ENCODE measurements at regions of chr6 and their contacts with region 1.

Region 1: GRCh38 chr6:79949233-79949632 is 1.9 kb upstream of the ELOVL4 start:
- DNase-seq: peak; percentile 23
- H3K4me3 ChIP-seq: no peak overlapping the region
- H3K27ac ChIP-seq: no peak overlapping the region
- H3K27me3 ChIP-seq: peaks cover 6% of the 10 kb centered on the region
- CTCF ChIP-seq: peak; percentile 72

Region 2: GRCh38 chr6:79307321-79308036 is 641.8 kb before region 1 on chr6:
- CTCF ChIA-PET with region 1: no interaction called
- POLR2A ChIA-PET with region 1: no interaction called
- DNase-seq: no peak
- H3K4me3 ChIP-seq: no peak overlapping the region
- H3K27ac ChIP-seq: no peak overlapping the region
- H3K27me3 ChIP-seq: no peaks in the 10 kb centered on the region
- CTCF ChIP-seq: no peak

Region 3: DNA sequence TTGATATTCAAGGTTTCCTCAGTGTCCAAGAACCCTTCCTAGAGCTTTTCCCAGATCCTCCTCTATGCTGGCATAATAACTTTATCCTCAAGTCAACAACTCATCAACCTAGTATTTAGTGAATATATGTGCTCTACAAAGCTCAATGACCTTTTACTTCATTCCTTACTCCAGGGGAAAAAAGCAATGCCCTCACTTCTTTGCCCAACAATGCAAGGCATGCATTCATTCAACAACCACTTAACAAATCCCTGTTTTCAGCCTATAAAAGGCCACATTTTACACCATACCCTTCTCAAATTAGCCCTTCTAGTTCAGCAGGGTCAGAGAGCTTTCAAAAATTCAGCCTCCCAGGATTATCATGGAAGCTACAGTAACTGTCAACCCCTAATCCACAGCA is 19.2 kb before region 1 on chr6:
- CTCF ChIA-PET with region 1: interaction called, 10 read pairs
- POLR2A ChIA-PET with region 1: no interaction called
- DNase-seq: no peak
- H3K4me3 ChIP-seq: no peak overlapping the region
- H3K27ac ChIP-seq: no peak overlapping the region
- H3K27me3 ChIP-seq: no peaks in the 10 kb centered on the region
- CTCF ChIP-seq: no peak

Region 4: GRCh38 chr6:79964607-79965081 is 15.4 kb after region 1 on chr6:
- CTCF ChIA-PET with region 1: interaction called, 10 read pairs
- POLR2A ChIA-PET with region 1: no interaction called
- DNase-seq: no peak
- H3K4me3 ChIP-seq: no peak overlapping the region
- H3K27ac ChIP-seq: no peak overlapping the region
- H3K27me3 ChIP-seq: no peaks in the 10 kb centered on the region
- CTCF ChIP-seq: no peak

Region 5: DNA sequence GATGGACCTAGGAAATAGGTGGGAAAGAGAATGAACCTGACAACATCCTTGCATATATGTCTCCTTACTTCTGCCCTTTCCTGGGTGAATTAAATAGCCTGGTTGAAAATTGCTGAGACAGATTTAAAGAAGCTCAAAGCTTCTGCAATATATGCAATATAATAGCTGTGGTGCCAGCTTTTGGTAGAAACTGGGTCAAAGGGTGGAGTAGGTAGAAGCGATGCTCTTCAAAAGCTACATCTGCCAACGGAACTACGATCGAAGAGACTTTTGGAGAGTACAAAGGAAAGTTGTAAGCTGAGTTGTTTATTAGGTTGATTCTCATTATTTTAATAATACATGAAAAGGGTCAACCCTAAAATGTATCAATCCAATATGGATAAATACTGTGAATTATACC is 32.4 kb after region 1 on chr6:
- CTCF ChIA-PET with region 1: interaction called, 11 read pairs
- POLR2A ChIA-PET with region 1: no interaction called
- DNase-seq: no peak
- H3K4me3 ChIP-seq: no peak overlapping the region
- H3K27ac ChIP-seq: no peak overlapping the region
- H3K27me3 ChIP-seq: no peaks in the 10 kb centered on the region
- CTCF ChIP-seq: no peak

Region 6: GRCh38 chr6:80004173-80005072 is 55.2 kb after region 1 on chr6 and contains the start of gene TTK:
- CTCF ChIA-PET with region 1: interaction called, 14 read pairs
- POLR2A ChIA-PET with region 1: no interaction called
- DNase-seq: peak; percentile 86
- H3K4me3 ChIP-seq: peak within 1 kb of the TSS; percentile 80
- H3K27ac ChIP-seq: peak within 1 kb of the TSS; percentile 85
- H3K27me3 ChIP-seq: no peaks in the 10 kb centered on the region
- CTCF ChIP-seq: no peak
- polyA plus RNA-seq, gene TTK: 5.1 and 8.0 TPM in 2 replicates

Region 7: DNA sequence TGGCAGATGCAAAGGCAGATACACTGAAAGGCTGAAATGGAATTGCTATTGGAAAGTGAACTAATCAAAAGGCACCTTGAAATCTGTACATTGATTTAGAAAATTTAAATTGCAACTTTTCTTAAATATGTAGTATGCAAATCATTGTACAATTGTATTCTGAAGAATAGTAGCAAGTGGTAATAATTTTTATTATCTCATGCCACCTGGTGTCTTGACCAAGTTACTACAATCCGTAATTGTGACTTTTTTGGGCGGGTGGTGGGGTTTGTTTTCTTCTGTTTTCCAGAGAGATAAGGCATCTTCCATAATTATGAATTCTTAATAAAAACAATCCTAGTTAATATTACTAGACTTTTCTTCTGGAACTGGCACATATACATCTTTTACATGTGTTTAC is 144.8 kb after region 1 on chr6:
- CTCF ChIA-PET with region 1: interaction called, 78 read pairs
- POLR2A ChIA-PET with region 1: no interaction called
- DNase-seq: no peak
- H3K4me3 ChIP-seq: no peak overlapping the region
- H3K27ac ChIP-seq: no peak overlapping the region
- H3K27me3 ChIP-seq: no peaks in the 10 kb centered on the region
- CTCF ChIP-seq: peak; percentile 56

Region 8: DNA sequence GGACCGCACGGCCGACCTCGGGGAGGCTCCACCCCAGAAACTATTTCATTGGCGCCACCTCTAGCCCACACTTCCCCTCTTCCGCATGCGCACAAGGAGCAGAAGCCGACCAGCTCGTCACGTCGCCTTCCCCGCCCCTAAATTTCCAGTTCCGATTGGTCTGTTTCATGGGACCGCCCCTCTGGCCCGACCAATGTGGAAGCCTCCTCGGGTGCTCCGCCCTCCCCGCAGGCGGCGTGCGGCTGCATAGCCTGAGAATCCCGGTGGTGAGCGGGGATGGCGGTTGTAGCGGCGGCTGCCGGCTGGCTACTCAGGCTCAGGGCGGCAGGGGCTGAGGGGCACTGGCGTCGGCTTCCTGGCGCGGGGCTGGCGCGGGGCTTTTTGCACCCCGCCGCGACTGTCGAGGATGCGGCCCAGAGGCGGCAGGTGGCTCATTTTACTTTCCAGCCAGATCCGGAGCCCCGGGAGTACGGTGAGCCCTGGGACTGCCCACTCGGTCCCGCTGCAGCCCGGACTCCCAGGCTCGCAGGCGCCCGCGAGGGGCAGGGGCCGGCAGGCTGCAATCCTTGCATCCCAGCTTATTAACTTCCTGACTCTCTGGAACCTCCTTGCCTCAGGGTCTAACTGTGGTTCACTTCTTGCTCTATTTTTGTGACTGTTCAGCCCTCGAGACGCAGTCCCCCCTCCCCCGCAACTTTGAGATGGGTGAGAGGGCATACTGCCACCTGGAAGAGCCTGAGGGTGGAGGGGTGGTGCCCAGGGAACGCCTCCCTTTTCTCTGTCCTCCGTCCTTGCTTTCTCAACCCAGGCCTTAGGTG is 157.4 kb after region 1 on chr6 and contains the start of gene BCKDHB:
- CTCF ChIA-PET with region 1: interaction called, 10 read pairs
- POLR2A ChIA-PET with region 1: no interaction called
- DNase-seq: peak; percentile 93
- H3K4me3 ChIP-seq: peak within 1 kb of the TSS; percentile 78
- H3K27ac ChIP-seq: peak within 1 kb of the TSS; percentile 59
- H3K27me3 ChIP-seq: no peaks in the 10 kb centered on the region
- CTCF ChIP-seq: no peak
- polyA plus RNA-seq, gene BCKDHB: 16.3 and 21.3 TPM in 2 replicates